PC-3 (cell line): ENCODE measurements at regions of chr1 and their contacts with region 1.

Region 1: GRCh38 chr1:100037927-100038659 is 68.3 kb downstream of the SLC35A3 start:
- DNase-seq: peak; percentile 85
- ATAC-seq: peak; percentile 88
- H3K4me3 ChIP-seq: peak overlapping the region; percentile 77
- H3K27ac ChIP-seq: peak overlapping the region; percentile 81
- H3K4me1 ChIP-seq: peaks cover 20% of the 10 kb centered on the region
- H3K27me3 ChIP-seq: no peaks in the 10 kb centered on the region
- CTCF ChIP-seq: no peak

Region 2: DNA sequence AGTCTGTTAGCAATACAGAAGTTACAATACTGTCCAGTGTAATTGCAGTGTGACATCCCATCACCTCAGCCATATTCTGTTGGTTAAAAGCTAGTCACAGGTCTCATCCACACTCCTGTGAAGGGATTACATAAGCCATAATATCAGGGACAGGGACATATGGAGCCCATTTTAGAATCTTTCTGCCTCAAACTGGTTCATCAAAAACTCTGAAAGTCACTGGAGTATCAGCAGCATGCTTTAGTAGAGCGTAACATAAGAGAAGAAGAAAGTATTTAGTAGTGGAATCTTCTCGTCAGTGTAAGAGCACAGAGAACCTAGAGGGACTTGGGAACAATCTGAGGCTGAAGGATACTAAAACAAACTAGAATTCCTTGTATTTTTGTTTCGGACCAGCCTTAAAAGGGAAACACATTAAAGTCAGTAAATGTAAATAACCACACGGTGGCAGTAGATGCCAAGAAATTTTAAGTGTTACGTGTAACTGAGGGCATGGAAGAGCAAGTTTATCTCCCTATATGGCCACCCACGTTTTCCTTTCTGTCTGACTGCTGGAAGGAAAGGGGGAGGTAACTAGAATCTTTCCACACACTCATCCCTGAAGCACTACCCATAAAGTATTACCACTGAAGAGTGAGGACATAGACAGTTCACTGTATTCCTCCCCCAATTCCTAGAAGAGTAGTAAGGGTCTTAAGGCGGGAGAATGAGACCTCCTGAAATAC is 229.5 kb before region 1 on chr1:
- CTCF ChIA-PET with region 1: interaction called, 7 read pairs
- POLR2A ChIA-PET with region 1: no interaction called
- intact Hi-C with region 1: loop called (anchors 1 kb)
- DNase-seq: peak; percentile 93
- ATAC-seq: peak; percentile 91
- H3K4me3 ChIP-seq: peak overlapping the region; percentile 46
- H3K27ac ChIP-seq: no peak overlapping the region
- H3K4me1 ChIP-seq: peaks cover 10% of the 10 kb centered on the region; the same call in 1 of the 2 replicates
- H3K27me3 ChIP-seq: peaks cover 24% of the 10 kb centered on the region
- CTCF ChIP-seq: peak; percentile 76

Region 3: DNA sequence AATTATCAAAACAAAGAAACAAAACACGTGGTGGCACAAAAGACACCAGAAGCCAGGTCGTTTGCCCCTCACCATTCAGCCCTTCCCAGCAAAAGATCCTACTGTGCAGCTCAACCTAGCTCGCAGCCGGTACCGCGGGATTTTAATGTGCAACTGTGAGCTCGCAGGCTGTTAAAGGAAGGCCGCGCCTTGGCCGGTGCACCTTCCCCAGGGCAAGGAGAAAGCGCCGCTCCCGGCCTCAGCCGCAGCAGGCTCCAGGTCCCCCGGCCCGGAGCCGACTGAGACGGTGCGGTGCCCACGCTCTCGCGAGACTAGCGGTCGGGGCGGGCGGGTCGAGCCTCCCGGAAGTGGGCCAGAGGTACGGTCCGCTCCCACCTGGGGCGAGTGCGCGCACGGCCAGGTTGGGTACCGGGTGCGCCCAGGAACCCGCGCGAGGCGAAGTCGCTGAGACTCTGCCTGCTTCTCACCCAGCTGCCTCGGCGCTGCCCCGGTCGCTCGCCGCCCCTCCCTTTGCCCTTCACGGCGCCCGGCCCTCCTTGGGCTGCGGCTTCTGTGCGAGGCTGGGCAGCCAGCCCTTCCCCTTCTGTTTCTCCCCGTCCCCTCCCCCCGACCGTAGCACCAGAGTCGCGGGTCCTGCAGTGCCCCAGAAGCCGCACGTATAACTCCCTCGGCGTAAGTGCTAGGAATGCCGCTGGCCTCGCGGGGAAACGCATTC is 188.2 kb before region 1 on chr1 and contains the start of gene AGL:
- CTCF ChIA-PET with region 1: no interaction called
- POLR2A ChIA-PET with region 1: no interaction called
- intact Hi-C with region 1: loop called (anchors 2 kb)
- DNase-seq: peak; percentile 85
- ATAC-seq: peak; percentile 91
- H3K4me3 ChIP-seq: peak within 1 kb of the TSS; percentile 98
- H3K27ac ChIP-seq: peak within 1 kb of the TSS; percentile 48
- H3K4me1 ChIP-seq: peaks cover 17% of the 10 kb centered on the region; the same call in 1 of the 2 replicates
- H3K27me3 ChIP-seq: no peaks in the 10 kb centered on the region
- CTCF ChIP-seq: no peak
- total RNA-seq, gene AGL: 8.7 and 9.8 TPM in 2 replicates

Region 4: GRCh38 chr1:99969729-99970621 is 68.1 kb before region 1 on chr1 and contains the start of gene SLC35A3:
- CTCF ChIA-PET with region 1: no interaction called
- POLR2A ChIA-PET with region 1: no interaction called
- intact Hi-C with region 1: loop called (anchors 2 kb)
- DNase-seq: peak; percentile 83
- ATAC-seq: peak; percentile 86
- H3K4me3 ChIP-seq: peak within 1 kb of the TSS; percentile 81
- H3K27ac ChIP-seq: peak within 1 kb of the TSS; percentile 65
- H3K4me1 ChIP-seq: peaks cover 46% of the 10 kb centered on the region
- H3K27me3 ChIP-seq: no peaks in the 10 kb centered on the region
- CTCF ChIP-seq: no peak
- total RNA-seq, gene SLC35A3: 31.4 and 46.5 TPM in 2 replicates

Region 5: DNA sequence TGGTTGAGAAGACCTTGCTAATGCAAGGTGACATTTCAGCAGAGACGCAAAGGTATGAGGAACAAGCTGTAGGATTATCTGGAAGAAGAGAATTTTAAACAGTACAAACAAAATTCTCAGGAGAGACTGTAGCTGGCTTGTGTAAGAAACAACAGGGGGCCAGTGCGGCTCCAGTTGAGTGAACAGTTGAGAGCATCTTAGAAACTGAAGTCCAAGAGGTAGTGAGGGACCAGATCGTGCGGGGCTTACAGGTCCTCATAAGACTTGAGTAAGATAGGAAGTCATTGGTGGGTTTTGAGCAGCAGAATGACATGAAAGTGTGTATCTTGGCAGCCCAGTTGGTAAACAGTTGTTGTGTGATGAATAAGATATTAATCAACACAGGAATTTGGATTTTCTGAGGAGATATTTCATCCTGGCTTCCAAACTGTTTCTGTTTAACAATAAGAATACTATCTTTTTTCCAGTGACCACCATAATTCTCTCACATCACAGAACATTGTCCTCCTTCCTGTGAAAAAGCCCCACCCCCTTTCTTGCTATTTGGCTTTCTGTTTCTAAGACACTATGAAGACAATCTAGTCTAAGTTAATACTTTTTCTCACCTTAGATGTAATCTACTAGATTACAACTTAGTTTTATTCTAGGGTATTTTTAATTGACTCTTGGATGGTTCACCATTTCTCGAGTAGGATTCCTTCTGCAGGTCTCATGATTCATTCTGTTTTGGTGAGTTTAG is 32.3 kb after region 1 on chr1:
- CTCF ChIA-PET with region 1: interaction called, 14 read pairs
- POLR2A ChIA-PET with region 1: interaction called, 6 read pairs
- intact Hi-C with region 1: no loop called
- DNase-seq: no peak
- ATAC-seq: no peak
- H3K4me3 ChIP-seq: no peak overlapping the region
- H3K27ac ChIP-seq: no peak overlapping the region
- H3K4me1 ChIP-seq: no peaks in the 10 kb centered on the region
- H3K27me3 ChIP-seq: no peaks in the 10 kb centered on the region
- CTCF ChIP-seq: no peak

Region 6: GRCh38 chr1:100132566-100133477 is 94.7 kb after region 1 on chr1 and contains the starts of genes SASS6 and TRMT13:
- CTCF ChIA-PET with region 1: no interaction called
- POLR2A ChIA-PET with region 1: no interaction called
- intact Hi-C with region 1: loop called (anchors 2 kb)
- DNase-seq: peak; percentile 97
- ATAC-seq: peak; percentile 94
- H3K4me3 ChIP-seq: peak within 1 kb of the TSS; percentile 77
- H3K27ac ChIP-seq: peak within 1 kb of the TSS; percentile 59
- H3K4me1 ChIP-seq: peaks cover 29% of the 10 kb centered on the region
- H3K27me3 ChIP-seq: no peaks in the 10 kb centered on the region
- CTCF ChIP-seq: no peak
- total RNA-seq, gene SASS6: 9.0 and 9.2 TPM in 2 replicates
- total RNA-seq, gene TRMT13: 6.7 and 9.4 TPM in 2 replicates